ENCODE measurements at regions of chr1 and their contacts with region 1.

Region 1: DNA sequence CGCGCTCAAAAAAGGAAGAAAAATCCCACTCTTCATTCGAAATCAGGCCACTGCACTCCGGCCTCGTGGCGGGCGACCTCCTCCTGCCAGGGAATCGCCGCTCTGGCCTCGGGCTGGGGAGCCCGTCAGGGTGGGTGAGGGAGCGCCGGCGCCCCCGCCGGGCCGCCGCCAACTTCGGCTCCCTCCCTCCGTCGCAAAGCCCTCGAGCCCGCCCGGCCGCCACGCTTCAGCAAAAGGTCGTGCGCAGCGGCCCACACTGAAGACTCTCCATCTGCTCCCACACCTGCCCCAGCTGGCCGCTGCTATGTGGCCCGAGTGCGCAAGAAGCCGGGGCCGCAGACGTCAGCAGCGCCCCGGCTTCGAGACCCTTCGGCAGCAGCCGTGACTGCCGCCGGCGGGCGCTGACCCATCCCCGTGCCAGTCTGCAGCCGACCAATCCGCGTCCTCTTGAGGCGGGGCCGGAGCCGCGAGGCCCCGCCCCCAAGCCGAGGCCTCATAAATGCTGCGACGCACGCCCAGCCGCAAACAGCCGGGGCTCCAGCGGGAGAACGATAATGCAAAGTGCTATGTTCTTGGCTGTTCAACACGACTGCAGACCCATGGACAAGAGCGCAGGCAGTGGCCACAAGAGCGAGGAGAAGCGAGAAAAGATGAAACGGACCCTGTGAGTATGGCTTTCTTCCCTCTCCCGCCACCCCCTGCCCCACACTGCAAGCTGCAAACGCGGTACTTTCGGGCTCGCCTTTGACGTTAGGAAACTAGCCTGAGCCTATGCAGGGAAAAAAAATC is at the start of gene RGS2:
- DNase-seq: peak; percentile 93 to 94
- H3K4me3 ChIP-seq: peak within 1 kb of the TSS; percentile 49
- H3K4me3 Mint-ChIP-seq: peak within 1 kb of the TSS; percentile 97
- H3K27ac Mint-ChIP-seq: peak within 1 kb of the TSS; percentile 90
- H3K4me1 ChIP-seq: no peaks in the 10 kb centered on the region
- H3K4me1 Mint-ChIP-seq: peaks cover 20% of the 10 kb centered on the region
- H3K27me3 ChIP-seq: no peaks in the 10 kb centered on the region
- H3K27me3 Mint-ChIP-seq: no peaks in the 10 kb centered on the region
- CTCF ChIP-seq: peak; percentile 28 to 32
- total RNA-seq, gene RGS2: 5.1 and 5.9 TPM in 2 replicates

Region 2: GRCh38 chr1:192700834-192701271 is 107.9 kb before region 1 on chr1:
- CTCF ChIA-PET with region 1: no interaction called
- POLR2A ChIA-PET with region 1: no interaction called
- intact Hi-C with region 1: loop called (anchors 5 kb)
- DNase-seq: peak in 1 of 2 experiments; percentile 9
- H3K4me3 ChIP-seq: no peak overlapping the region
- H3K4me3 Mint-ChIP-seq: peak overlapping the region; percentile 19
- H3K27ac Mint-ChIP-seq: no peak overlapping the region
- H3K4me1 ChIP-seq: peaks cover 34% of the 10 kb centered on the region
- H3K4me1 Mint-ChIP-seq: no peaks in the 10 kb centered on the region
- H3K27me3 ChIP-seq: no peaks in the 10 kb centered on the region
- H3K27me3 Mint-ChIP-seq: no peaks in the 10 kb centered on the region
- CTCF ChIP-seq: no peak

Region 3: DNA sequence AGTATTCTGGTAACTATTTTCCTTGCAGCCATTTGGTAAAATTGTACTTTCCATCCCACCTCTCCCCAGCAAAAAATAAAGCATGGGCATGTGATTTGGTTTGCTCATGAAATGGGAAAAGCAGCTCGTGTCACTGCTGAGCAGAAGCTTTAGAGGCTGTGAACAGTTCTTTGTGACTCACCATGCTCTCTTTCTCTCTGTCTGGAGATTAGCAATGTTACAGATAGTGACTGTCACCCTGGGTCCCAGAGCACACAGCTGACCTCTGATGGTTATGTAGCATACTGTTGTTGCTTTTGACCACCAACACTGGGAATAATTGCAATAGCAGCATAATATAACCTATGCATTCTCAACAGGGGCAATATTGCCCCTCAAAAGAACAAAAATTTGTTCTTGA is 70.7 kb after region 1 on chr1:
- CTCF ChIA-PET with region 1: no interaction called
- POLR2A ChIA-PET with region 1: no interaction called
- intact Hi-C with region 1: loop called (anchors 1 kb)
- DNase-seq: peak in 1 of 2 experiments; percentile 9
- H3K4me3 ChIP-seq: no peak overlapping the region
- H3K4me3 Mint-ChIP-seq: no peak overlapping the region
- H3K27ac Mint-ChIP-seq: no peak overlapping the region
- H3K4me1 ChIP-seq: no peaks in the 10 kb centered on the region; the same call in 1 of the 2 replicates
- H3K4me1 Mint-ChIP-seq: no peaks in the 10 kb centered on the region
- H3K27me3 ChIP-seq: no peaks in the 10 kb centered on the region
- H3K27me3 Mint-ChIP-seq: no peaks in the 10 kb centered on the region
- CTCF ChIP-seq: peak in 1 of 2 experiments; percentile 27

Region 4: GRCh38 chr1:193013005-193013404 is 204.3 kb after region 1 on chr1:
- CTCF ChIA-PET with region 1: interaction called, 4 read pairs
- POLR2A ChIA-PET with region 1: no interaction called
- intact Hi-C with region 1: loop called (anchors 1 kb)
- DNase-seq: no peak
- H3K4me3 ChIP-seq: no peak overlapping the region
- H3K4me3 Mint-ChIP-seq: no peak overlapping the region
- H3K27ac Mint-ChIP-seq: no peak overlapping the region
- H3K4me1 ChIP-seq: peaks cover 19% of the 10 kb centered on the region
- H3K4me1 Mint-ChIP-seq: peaks cover 9% of the 10 kb centered on the region
- H3K27me3 ChIP-seq: no peaks in the 10 kb centered on the region
- H3K27me3 Mint-ChIP-seq: no peaks in the 10 kb centered on the region
- CTCF ChIP-seq: no peak

Region 5: GRCh38 chr1:193031438-193031837 is 222.7 kb after region 1 on chr1:
- CTCF ChIA-PET with region 1: no interaction called
- POLR2A ChIA-PET with region 1: no interaction called
- intact Hi-C with region 1: loop called (anchors 1 kb)
- DNase-seq: no peak
- H3K4me3 ChIP-seq: no peak overlapping the region
- H3K4me3 Mint-ChIP-seq: no peak overlapping the region
- H3K27ac Mint-ChIP-seq: no peak overlapping the region
- H3K4me1 ChIP-seq: peaks cover 2% of the 10 kb centered on the region
- H3K4me1 Mint-ChIP-seq: peaks cover 10% of the 10 kb centered on the region
- H3K27me3 ChIP-seq: no peaks in the 10 kb centered on the region
- H3K27me3 Mint-ChIP-seq: no peaks in the 10 kb centered on the region
- CTCF ChIP-seq: peak; percentile 28 to 33

Region 6: GRCh38 chr1:193094112-193094511 is 285.4 kb after region 1 on chr1:
- CTCF ChIA-PET with region 1: no interaction called
- POLR2A ChIA-PET with region 1: no interaction called
- intact Hi-C with region 1: no loop called
- DNase-seq: no peak
- H3K4me3 ChIP-seq: no peak overlapping the region
- H3K4me3 Mint-ChIP-seq: no peak overlapping the region
- H3K27ac Mint-ChIP-seq: no peak overlapping the region
- H3K4me1 ChIP-seq: no peaks in the 10 kb centered on the region
- H3K4me1 Mint-ChIP-seq: no peaks in the 10 kb centered on the region
- H3K27me3 ChIP-seq: no peaks in the 10 kb centered on the region
- H3K27me3 Mint-ChIP-seq: no peaks in the 10 kb centered on the region
- CTCF ChIP-seq: no peak

Region 7: GRCh38 chr1:193121616-193122593 is 313.2 kb after region 1 on chr1 and contains the start of gene CDC73:
- CTCF ChIA-PET with region 1: no interaction called
- POLR2A ChIA-PET with region 1: no interaction called
- intact Hi-C with region 1: loop called (anchors 1 kb)
- DNase-seq: peak; percentile 97
- H3K4me3 ChIP-seq: peak within 1 kb of the TSS; percentile 79
- H3K4me3 Mint-ChIP-seq: peak within 1 kb of the TSS; percentile 89
- H3K27ac Mint-ChIP-seq: peak within 1 kb of the TSS; percentile 94
- H3K4me1 ChIP-seq: peaks cover 12% of the 10 kb centered on the region
- H3K4me1 Mint-ChIP-seq: peaks cover 9% of the 10 kb centered on the region
- H3K27me3 ChIP-seq: no peaks in the 10 kb centered on the region
- H3K27me3 Mint-ChIP-seq: no peaks in the 10 kb centered on the region
- CTCF ChIP-seq: peak; percentile 83 to 88
- total RNA-seq, gene CDC73: 48.9 and 50.5 TPM in 2 replicates

Measured in Caco-2 (cell line).